ENCODE measurements at regions of chr14 and their contacts with region 1.

Region 1: DNA sequence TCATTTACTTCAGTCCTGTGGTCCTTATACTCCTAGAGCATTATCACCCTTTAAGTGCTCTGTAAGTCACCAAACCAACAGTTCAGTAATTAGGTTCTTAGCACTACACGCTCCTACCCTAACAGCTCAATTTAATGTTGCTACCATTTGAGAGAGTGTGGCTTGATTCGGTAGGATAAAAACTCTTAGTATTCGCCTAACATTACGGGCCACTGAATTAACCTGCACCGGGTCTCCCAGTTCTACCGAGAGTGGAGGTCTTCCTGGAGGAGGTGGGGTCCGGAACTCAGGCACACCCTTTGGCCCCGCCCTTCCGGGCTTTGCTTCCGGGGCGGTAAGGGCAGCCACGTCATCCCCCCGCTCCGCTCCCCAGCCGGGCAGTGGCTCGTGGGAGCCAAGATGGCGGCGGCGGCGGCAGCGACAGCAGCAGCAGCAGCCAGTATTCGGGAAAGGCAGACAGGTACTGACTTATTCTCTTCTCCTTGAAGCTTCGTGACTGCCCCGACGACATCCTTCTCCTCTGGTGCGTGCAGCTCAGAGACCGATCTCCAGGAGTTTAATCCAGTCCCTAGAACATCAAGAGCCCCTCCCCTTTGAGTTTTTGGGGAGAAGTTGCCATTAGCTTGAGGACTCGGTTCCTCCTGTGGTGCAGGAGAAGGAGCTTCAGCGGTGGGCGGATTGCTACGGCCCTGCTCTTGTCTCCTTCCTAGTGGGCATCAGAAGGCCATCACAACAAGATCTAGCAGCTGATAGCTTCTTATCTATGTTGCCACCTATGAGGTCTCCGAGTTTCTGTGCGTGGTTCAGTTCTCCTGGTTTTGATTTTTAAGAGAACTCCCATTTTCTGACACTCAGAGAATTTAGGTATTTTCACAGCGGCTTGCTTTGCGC is at the start of gene SCFD1:
- DNase-seq: peak; percentile 69
- ATAC-seq: peak; percentile 95
- H3K4me3 ChIP-seq: peak within 1 kb of the TSS; percentile 97
- H3K27ac ChIP-seq: peak within 1 kb of the TSS; percentile 97
- H3K4me1 ChIP-seq: peaks cover 26% of the 10 kb centered on the region
- H3K27me3 ChIP-seq: no peaks in the 10 kb centered on the region
- CTCF ChIP-seq: no peak
- EP300 ChIP-seq: no peak
- POLR2A ChIP-seq: peak; percentile 99
- RAD21 ChIP-seq: no peak
- polyA plus RNA-seq, gene SCFD1: 72.5 to 89.2 TPM

Region 2: GRCh38 chr14:30558675-30559555 is 63.3 kb before region 1 on chr14 and contains the start of gene G2E3:
- CTCF ChIA-PET with region 1: interaction called, 4 read pairs
- POLR2A ChIA-PET with region 1: interaction called, 3 read pairs
- RAD21 ChIA-PET with region 1: interaction called, 4 read pairs
- SMC1A ChIA-PET with region 1: no interaction called
- in situ Hi-C with region 1: no loop called
- intact Hi-C with region 1: loop called (anchors 2 kb)
- DNase-seq: peak; percentile 48
- ATAC-seq: peak; percentile 97
- H3K4me3 ChIP-seq: peak within 1 kb of the TSS; percentile 94
- H3K27ac ChIP-seq: peak within 1 kb of the TSS; percentile 84
- H3K4me1 ChIP-seq: no peaks in the 10 kb centered on the region
- H3K27me3 ChIP-seq: no peaks in the 10 kb centered on the region; a peak in 1 of 4 replicates
- CTCF ChIP-seq: no peak
- EP300 ChIP-seq: no peak
- POLR2A ChIP-seq: peak; percentile 94
- RAD21 ChIP-seq: no peak
- polyA plus RNA-seq, gene G2E3: 15.0 to 38.0 TPM